ENCODE measurements at regions of chr1 and their contacts with region 1.

Region 1: DNA sequence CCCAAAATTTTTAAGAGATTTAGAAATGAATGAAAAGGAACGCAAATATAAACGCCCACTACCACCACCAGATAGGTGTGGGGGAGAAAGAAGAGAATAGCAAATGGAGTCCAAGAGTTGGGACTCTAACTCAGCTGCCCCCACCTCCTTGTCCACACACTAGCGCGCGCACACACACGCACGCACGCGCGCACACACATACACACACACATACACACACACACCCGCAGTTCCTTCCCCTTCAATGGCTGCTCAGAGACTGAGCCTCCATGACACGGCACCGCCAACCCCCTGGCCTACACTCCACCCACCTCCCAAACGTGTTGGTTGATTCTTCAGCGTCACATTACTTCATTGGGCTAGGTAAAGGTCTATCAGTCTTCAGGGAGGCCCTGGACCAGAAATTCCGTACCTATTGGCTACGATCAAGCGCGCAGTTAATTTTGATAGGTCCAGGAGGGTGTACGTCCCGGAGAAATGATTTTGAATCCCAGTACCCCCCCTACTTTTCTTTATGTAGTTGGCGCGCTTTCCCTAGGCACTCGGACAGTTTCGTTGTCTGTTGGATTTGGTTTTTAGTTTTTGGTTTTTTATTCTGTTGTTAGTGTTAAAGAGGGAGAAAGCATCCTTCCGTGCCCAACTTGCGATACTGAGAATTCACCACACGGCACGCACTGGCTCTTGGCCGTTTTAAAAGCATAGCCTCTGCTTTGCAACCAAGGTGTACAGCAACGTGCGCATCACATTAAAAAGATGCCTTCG is at the start of gene ANP32E:
- DNase-seq: peak; percentile 79 to 98 (median 88)

Region 2: DNA sequence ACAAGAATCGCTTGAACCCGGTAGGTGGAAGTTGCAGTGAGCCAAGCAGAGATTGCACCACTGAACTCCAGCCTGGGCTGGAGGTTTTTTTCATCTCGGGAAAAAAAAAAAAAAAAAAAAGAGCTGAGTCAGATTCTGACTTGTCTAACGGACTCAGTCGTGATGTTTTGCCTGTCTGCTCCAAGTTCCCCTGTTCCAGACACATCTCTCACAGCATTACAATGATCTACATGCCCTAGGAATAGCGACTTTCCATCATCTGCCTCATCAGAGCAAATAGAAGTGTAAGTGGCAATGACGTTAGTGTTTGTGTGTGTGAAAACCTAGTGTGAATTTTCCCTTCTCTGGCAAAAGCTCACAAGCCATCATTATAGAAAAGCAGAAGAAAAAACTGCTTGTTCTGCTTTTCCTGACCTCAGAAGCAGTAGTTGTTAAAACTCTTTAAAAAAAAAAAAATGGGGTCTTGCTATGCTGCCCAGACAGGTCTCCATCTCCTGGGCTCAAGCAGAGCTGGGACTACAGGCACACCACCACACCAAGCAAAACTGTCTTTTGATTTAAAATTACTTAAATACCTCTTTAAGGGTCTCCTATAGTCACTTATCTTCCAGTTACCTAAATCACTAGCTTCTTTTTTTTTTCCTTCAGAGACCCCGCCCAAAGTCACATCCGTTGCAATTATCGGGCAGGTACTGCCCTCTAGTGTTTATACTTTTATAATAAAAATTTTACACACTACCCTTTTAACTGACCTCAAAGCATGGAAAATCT is 49.1 kb before region 1 on chr1:
- intact Hi-C with region 1: no loop called
- DNase-seq: no peak

Region 3: DNA sequence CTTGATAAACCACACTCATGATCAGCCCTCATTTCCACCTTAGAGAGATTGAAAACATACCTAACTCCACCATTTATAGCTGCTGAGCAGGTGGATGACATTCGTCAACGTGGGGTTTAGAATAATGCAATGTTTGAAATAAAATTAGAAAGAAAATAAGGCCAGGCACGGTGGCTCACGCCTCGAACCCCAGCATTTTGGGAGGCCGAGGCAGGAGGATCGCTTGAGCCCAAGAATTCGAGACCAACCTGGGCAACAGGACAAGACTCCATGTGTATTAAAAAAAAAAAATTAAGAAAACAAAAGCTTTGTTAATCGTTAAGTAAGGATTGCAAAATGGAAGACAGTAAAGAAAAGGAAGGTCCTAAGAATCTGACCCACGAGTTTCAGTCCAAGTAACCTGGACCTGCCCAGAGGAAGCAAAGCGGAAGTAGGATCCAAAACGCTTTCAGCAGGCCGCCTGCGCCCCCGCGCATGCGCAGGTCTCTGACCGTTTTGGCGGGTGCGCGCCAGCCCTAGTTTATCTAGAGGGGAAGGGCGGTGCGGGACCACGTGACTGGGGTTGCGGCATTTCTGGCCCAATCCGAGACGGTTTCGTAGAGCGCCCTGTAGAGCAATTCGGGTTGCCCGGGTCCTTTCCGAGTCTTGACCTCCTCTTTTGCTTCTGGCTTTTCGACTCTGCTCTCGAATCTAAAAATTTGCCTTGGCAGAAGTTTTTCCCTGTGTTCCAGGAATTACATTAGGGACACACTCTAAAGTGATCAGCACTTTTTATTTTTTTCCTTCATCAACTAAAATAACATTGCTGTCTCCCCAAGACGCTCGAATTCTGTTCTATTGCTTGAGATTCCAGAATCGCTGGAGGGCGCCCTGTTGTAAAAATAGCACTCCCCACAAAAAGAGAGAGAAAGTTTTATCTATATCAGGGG is 22.6 kb before region 1 on chr1:
- intact Hi-C with region 1: loop called (anchors 2 kb)
- DNase-seq: peak; percentile 92 to 99 (median 94)

Region 4: DNA sequence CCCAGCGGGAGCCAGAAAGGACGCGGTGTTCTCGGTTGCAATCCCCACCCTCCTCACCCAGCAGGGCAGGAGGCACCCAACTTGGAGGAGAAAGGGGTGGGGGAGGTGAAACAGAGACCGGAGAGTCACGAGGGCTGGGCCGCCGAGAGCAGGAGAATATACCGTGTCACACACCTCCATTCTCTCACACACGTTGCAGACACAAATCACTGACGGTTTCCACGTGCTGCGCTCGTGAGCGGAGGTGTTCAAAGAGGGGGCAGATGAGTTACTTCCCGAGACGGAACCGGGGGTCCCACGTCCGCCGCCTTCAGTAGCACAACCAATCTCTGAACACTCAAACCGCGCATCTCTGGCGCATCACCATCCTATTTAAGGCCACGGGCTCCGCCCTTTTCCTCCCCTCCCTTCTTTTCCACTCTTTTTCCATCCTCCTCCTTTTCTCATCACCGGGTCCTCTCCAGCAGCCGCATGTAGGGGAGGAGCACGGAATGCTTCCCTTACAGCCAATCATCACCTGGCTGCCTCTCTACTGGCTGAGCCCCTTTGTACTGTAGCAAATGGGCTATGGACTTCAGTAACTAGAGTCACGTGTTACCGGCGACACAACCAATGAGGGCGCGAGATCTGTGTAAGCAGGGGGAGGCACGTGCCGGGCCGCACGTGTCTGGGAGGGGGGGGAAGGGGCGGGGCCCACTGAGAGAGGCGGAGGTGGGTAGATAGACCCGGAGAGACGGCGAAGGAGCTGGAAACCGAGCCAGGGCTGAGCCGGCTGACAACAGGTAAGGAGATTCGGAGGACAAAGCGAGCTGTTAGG is 46.0 kb after region 1 on chr1 and contains the start of gene CIART:
- intact Hi-C with region 1: loop called (anchors 10 kb)
- DNase-seq: peak; percentile 84 to 99 (median 94)

Measured in posterior cingulate gyrus (tissue), 11 donors.